Keratinocyte (primary cell): ENCODE measurements at regions of chr16 and their contacts with region 1.

Region 1: DNA sequence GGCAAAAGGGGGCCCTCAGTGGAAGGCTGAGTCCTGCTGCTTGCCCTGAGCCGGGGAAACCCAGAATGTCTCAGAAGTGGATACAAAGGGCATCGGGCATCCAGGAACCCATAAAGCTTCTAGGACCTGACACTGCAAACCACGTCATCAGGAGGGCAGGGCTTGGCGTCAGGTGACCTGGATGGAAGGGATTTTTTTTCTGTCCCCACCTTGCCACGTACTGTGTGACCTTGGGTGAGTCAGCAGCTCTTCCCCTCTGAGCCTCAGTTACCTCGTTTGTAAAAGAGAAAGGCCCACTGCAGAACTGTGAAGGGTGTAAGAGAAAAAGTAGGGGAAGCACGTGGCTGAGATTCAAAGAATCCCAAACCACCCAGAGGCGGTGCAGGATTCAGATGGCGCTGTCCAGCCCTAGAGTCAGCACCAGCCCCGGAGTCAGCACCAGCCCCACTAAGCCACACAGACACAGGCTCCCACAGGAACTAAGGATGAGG is 53.7 kb downstream of the C16orf95 start:
- DNase-seq: no peak
- H3K4me3 ChIP-seq: no peak overlapping the region
- H3K27ac ChIP-seq: no peak overlapping the region
- H3K4me1 ChIP-seq: no peaks in the 10 kb centered on the region
- H3K27me3 ChIP-seq: peaks cover 7% of the 10 kb centered on the region
- CTCF ChIP-seq: no peak

Region 2: GRCh38 chr16:86554917-86555703 is 708.4 kb before region 1 on chr16 and contains the start of gene MTHFSD:
- dilution Hi-C with region 1: loop called (anchors 25 kb)
- DNase-seq: peak; percentile 52
- H3K4me3 ChIP-seq: peak within 1 kb of the TSS; percentile 76 to 93 (median 93)
- H3K27ac ChIP-seq: peak within 1 kb of the TSS; percentile 81
- H3K4me1 ChIP-seq: peaks cover 11% of the 10 kb centered on the region
- H3K27me3 ChIP-seq: no peaks in the 10 kb centered on the region
- CTCF ChIP-seq: no peak
- polyA plus RNA-seq, gene MTHFSD: 11.5 to 16.2 TPM (median 14.7 TPM) in 3 replicates

Region 3: DNA sequence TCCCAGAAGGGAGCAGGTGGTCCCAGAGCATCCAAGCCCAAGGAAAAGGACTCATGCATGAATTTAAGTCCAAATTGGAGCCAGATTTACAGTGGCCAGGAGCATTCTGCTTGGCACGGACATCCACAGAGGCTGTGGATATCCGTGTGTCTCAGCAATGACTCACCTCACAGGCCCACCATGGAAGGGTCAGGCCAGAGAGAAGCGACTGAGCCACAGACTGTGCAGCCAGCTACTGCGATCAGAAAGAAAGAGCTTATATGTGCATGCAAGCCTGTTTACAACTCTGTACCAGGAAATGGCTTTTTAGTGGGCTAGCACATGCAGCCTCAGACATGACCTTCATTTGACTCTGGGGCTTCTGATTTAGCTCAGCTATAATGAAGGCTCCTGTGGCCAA is 177.4 kb before region 1 on chr16:
- dilution Hi-C with region 1: no loop called
- DNase-seq: no peak
- H3K4me3 ChIP-seq: no peak overlapping the region
- H3K27ac ChIP-seq: no peak overlapping the region
- H3K4me1 ChIP-seq: no peaks in the 10 kb centered on the region
- H3K27me3 ChIP-seq: no peaks in the 10 kb centered on the region
- CTCF ChIP-seq: no peak